ENCODE measurements at regions of chr16 and their contacts with region 1.

Region 1: GRCh38 chr16:66406534-66407221 is 20.4 kb upstream of the BEAN1 start:
- DNase-seq: peak; percentile 54 to 96 (median 83)
- ATAC-seq: peak; percentile 93 to 95 (median 95)
- H3K4me3 ChIP-seq: peak overlapping the region in 3 of 4 donors; percentile 22 to 54 (median 24)
- H3K27ac ChIP-seq: no peak overlapping the region
- H3K4me1 ChIP-seq: peaks cover 0 to 8% (median 3%) of the 10 kb centered on the region in 3 donors
- H3K27me3 ChIP-seq: no peaks in the 10 kb centered on the region
- CTCF ChIP-seq: peak; percentile 80 to 97 (median 92)

Region 2: DNA sequence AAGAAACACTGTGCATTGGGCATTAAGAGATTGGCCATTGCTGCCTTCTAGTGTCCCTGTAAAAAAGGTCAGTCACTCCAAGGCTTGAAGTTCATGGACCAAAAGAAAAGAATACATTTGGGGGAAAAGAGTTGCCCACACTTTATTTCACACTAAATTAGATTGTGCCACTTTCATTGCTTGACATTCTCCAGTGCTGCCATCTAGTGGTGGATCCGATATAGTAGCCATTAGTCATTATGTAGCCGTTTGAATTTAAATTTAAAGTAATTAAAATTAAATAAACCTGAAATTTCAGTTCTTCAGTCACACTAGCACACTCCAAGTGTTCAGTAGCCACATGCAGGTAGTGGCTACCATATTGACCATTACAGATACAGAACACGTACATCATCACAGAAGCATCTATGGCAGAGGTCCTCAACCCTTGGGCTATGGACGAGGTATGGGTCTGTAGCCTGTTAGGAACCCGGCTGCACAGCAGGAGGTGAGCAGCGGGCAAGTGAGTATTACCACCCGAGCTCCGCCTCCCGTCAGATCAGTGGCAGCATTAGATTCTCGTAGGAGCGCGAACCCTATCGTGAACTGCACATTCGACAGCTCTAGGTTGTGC is 62.0 kb before region 1 on chr16:
- intact Hi-C with region 1: loop called in 1 of 3 experiments (anchors 10 kb)
- DNase-seq: no peak
- ATAC-seq: peak; percentile 50 to 79 (median 65)
- H3K4me3 ChIP-seq: no peak overlapping the region
- H3K27ac ChIP-seq: no peak overlapping the region
- H3K4me1 ChIP-seq: no peaks in the 10 kb centered on the region
- H3K27me3 ChIP-seq: no peaks in the 10 kb centered on the region
- CTCF ChIP-seq: peak; percentile 72 to 80 (median 75)

Region 3: DNA sequence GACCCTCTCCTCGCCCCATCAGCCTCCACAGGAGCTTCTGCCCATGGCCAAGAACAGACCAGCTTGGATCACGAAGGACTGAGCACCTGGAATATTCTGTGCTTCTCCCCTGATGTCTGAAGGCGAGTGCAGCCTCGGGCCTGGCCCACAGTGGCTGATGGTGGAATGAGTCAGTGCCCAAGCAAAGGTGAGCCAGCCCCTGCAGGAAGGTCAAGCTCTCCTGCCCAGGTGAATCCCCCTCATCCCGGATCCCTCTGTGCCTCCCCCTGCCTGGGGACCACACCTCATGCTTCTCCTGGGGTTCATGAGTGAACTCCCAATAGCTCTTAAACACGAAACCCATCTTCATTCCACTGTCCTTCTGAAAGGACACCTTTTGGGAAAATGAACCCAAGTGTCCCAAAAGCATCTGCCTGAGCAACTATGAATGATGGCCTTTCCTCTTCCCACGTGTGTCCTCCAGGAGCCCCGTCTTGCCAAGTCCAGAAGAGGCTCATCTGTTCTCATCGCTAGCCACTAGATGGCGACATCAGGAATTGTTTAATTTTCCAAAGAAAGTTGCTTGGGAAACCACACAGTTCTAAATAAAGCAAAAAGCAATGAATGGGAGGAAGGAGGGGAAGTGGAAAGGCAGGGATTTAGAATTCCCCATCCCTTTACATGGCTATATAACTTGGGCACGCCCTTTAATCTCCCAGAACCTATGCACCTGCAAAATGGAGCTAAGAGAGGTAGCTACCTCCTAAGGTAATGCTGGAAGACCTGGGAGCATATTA is 49.3 kb before region 1 on chr16:
- intact Hi-C with region 1: no loop called
- DNase-seq: peak in 2 of 6 donors; percentile 25 to 45
- ATAC-seq: peak; percentile 73 to 83 (median 80)
- H3K4me3 ChIP-seq: no peak overlapping the region
- H3K27ac ChIP-seq: no peak overlapping the region
- H3K4me1 ChIP-seq: no peaks in the 10 kb centered on the region
- H3K27me3 ChIP-seq: peaks cover 0 to 8% (median 0%) of the 10 kb centered on the region in 4 donors
- CTCF ChIP-seq: peak; percentile 43 to 72 (median 64)

Region 4: DNA sequence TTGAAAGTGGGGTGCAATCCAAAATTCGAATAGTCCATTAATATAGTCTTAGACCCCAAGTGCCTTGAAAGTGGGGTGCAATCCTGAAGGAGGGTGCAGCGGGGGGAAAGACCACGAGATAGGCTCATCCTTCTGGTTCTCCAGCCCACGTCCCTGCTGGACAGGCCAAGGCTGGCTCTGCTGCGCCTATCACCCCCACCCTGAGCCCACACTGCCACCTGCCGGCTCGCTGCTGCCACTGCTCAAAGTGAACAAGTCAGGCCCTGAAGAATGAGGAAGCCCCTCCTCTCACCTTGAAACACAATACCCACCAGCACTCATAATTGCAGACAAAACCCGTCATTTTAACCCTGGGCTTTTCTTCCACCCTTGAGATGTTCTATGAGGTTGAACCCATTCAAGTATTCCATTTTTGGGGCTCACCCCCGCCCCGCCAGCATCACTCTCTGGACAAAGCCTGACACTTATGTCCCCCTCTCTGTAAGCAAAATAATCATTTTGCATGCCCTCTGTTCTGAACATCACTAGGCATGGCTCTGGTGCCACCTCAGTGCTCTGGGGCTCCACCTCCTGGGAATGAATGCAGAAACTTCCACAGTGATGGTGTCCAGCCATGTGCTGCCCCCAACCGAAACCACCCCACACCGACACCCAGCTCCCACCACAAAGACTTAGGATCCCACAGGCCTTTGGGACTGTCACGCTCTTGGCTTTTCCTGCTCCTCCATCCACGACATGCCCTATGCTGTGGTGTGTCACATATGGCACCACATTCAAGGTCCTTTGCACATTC is 77.2 kb after region 1 on chr16:
- intact Hi-C with region 1: loop called in 1 of 3 experiments (anchors 5 kb)
- DNase-seq: peak; percentile 61 to 92 (median 80)
- ATAC-seq: peak; percentile 78 to 88 (median 86)
- H3K4me3 ChIP-seq: no peak overlapping the region
- H3K27ac ChIP-seq: no peak overlapping the region
- H3K4me1 ChIP-seq: no peaks in the 10 kb centered on the region
- H3K27me3 ChIP-seq: no peaks in the 10 kb centered on the region
- CTCF ChIP-seq: peak; percentile 81 to 89 (median 88)

Region 5: GRCh38 chr16:66516808-66517585 is 110.3 kb after region 1 on chr16:
- intact Hi-C with region 1: no loop called
- DNase-seq: peak; percentile 89 to 99 (median 98)
- ATAC-seq: peak; percentile 92 to 97 (median 95)
- H3K4me3 ChIP-seq: peak overlapping the region in 2 of 4 donors; percentile 4 to 26
- H3K27ac ChIP-seq: peak overlapping the region; percentile 96 to 100 (median 99)
- H3K4me1 ChIP-seq: peaks cover 25 to 41% (median 28%) of the 10 kb centered on the region in 3 donors
- H3K27me3 ChIP-seq: no peaks in the 10 kb centered on the region
- CTCF ChIP-seq: no peak

Region 6: DNA sequence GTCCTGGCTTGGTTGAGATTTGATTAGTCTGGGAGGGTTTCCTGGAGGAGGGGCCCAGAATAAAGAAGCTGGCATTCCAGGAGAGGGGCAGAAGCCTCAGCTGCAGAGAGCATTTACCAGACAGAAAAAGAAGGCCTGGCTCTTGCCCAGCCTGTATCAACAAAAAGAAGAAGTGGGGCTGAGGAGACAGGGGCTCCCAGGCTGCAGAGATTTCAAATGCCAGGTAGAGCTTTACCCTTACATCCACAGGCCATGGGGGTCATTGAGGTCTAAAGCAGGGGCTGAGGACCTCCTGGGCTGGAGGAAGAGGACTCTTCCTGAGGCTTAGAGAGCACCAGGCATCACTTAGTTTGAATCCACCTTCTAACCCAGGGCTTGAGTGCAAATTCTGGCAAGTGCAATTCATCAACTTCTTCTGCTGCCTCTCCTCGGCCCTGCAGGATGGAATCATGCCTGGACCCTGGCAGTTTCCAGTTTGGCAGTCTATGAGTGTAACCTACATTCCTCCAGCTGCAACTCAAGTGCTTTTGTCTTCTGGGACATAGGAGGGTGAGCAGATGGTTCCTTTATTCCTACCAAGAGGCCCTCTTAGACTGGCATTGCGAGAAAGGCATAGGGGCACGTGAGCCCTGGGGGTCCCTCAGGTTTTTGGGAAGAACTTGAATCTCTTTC is 452.9 kb after region 1 on chr16:
- intact Hi-C with region 1: loop called in 1 of 3 experiments (anchors 10 kb)
- DNase-seq: peak in 1 of 6 donors; percentile 9
- ATAC-seq: no peak
- H3K4me3 ChIP-seq: no peak overlapping the region
- H3K27ac ChIP-seq: no peak overlapping the region
- H3K4me1 ChIP-seq: no peaks in the 10 kb centered on the region
- H3K27me3 ChIP-seq: no peaks in the 10 kb centered on the region
- CTCF ChIP-seq: no peak

Region 7: DNA sequence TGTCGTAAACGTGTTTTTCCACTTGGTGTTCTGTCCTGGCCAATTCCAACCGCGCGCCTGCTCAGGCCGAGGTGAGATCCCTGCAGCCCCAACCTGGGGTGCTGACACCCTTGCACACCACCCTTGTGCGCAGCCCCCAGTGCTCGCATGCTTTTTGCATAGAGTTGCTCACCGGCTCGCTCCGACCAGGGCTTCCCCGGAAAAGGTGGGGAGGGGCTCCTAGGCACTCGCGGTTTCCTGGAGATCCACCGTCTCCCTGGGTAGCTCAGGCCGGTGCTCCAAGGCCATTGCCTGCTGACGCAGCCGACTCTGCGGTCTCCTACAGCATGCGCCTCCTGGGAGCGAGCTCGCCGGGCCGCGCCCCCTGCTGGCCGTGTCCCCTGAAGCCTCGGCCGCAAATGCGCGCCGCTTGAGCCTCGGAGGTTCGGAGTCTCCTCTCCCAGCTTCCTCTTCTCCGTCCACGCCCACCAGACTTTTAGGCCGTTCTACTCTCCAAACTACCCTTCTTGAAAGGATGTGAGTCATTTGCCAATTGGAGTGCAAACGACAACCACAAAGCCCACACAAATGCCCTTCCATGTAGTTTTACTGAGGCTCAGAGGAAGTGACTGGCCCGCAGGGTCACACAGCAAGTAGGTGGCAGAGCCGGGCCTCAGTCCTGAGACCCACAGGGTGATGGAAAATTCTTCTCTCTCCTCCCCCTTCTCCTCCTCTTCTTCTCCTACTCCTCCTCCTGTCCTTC is 466.4 kb after region 1 on chr16:
- intact Hi-C with region 1: loop called in 2 of 3 experiments (anchors 5 to 10 kb)
- DNase-seq: peak; percentile 89 to 98 (median 92)
- ATAC-seq: peak; percentile 95 to 97 (median 96)
- H3K4me3 ChIP-seq: peak overlapping the region; percentile 9 to 47 (median 24)
- H3K27ac ChIP-seq: peak overlapping the region in 3 of 4 donors; percentile 10 to 57 (median 55)
- H3K4me1 ChIP-seq: peaks cover 6 to 11% (median 6%) of the 10 kb centered on the region in 3 donors
- H3K27me3 ChIP-seq: no peaks in the 10 kb centered on the region
- CTCF ChIP-seq: peak; percentile 92 to 95 (median 92)